ENCODE measurements at regions of chr17 and their contacts with region 1.

Region 1: DNA sequence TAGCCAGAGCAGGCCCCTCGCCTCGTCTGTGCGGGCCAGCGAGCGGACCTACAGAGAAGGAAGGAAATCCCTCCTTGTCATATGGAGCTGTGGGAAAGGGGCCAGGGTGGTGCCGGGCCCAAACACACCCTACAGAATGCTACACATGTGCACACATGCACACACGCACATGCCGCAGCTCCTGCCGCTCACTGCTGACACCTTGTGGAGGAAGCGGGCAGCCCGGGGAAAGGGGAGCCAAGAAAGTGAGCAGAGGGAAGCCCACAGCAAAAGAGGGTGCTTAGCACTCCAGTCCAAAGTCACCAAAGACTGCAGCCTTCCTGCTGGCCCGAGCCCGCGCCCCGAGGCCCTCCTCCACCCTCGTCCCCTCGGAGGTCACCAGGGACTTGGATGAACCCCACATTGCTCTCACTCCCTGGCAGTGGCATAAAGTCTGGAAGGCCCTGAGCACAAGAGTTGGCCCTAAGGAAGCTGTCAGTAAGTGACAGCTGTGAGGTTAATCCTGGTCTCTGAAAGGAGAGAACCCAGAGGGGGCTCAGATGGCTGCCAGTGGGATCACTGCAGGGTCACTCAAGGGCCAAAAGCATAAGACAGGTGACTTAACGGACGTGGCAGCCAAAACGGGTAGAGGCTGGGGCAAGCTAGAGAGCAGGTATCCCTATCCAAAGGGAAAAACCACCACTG is 68.2 kb downstream of the MYO18A start:
- DNase-seq: peak; percentile 78 to 85 (median 82)
- ATAC-seq: peak; percentile 15
- H3K4me3 ChIP-seq: no peak overlapping the region
- H3K27ac ChIP-seq: peak overlapping the region; percentile 6 to 62 (median 34)
- H3K4me1 ChIP-seq: peaks cover 61% of the 10 kb centered on the region
- H3K27me3 ChIP-seq: no peaks in the 10 kb centered on the region
- CTCF ChIP-seq: peak; percentile 88 to 95 (median 93)
- POLR2A ChIP-seq: no peak

Region 2: DNA sequence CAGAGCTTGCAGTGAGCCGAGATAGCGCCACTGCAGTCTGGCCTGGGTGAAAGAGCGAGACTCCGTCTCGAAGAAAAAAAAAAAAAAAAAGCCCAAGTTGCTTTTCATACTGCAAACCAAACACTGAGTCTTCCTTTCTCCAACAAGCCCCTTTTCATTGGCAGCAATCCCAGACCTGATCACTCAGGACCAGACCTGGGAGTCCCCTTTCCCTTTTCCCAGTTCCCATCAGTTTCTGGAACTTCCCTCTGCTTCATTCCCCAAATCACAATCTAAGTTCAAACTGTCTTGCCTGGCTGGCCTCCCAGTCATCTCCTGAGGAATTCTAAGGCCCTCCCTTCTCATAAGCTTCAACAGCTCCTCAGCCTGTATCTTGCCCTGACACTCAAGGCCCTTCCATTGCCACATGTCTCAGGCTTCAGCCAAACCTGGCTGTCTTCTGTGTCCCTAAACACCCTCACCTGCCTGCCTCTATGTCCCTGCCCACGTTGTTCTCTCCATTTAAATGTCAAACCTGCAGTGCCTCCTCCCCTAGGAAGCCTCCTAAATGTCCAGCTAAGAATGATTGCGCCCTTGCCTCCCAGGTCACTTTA is 148.8 kb before region 1 on chr17:
- intact Hi-C with region 1: loop called (anchors 5 kb)
- DNase-seq: no peak
- ATAC-seq: no peak
- H3K4me3 ChIP-seq: no peak overlapping the region
- H3K27ac ChIP-seq: no peak overlapping the region
- H3K4me1 ChIP-seq: peaks cover 4% of the 10 kb centered on the region
- H3K27me3 ChIP-seq: peaks cover 0 to 4% of the 10 kb centered on the region in 2 donors
- CTCF ChIP-seq: no peak
- POLR2A ChIP-seq: no peak

Region 3: DNA sequence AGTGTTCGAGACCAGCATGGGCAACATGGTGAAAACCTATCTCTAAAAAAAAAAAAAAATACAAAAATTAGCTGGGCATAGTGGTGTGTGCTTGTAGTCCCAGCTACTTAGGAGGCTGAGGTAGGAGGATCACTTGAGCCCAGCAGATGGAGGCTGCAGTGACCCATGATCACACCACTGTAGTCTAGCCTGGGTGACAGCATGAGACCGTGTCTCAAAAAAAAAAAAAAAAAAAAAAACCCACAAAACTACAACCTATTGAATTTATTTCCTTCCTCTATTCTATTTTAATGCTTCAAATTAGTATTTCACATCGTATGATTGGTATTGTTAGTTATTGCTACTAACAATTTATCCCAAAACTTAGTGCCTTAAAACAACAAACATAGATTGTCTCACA is 191.4 kb after region 1 on chr17:
- intact Hi-C with region 1: no loop called
- DNase-seq: no peak
- ATAC-seq: no peak
- H3K4me3 ChIP-seq: no peak overlapping the region
- H3K27ac ChIP-seq: no peak overlapping the region
- H3K4me1 ChIP-seq: no peaks in the 10 kb centered on the region
- H3K27me3 ChIP-seq: no peaks in the 10 kb centered on the region
- CTCF ChIP-seq: no peak
- POLR2A ChIP-seq: no peak

Measured in body of pancreas (tissue), 4 donors.